ENCODE measurements at regions of chr9 and their contacts with region 1.

Region 1: DNA sequence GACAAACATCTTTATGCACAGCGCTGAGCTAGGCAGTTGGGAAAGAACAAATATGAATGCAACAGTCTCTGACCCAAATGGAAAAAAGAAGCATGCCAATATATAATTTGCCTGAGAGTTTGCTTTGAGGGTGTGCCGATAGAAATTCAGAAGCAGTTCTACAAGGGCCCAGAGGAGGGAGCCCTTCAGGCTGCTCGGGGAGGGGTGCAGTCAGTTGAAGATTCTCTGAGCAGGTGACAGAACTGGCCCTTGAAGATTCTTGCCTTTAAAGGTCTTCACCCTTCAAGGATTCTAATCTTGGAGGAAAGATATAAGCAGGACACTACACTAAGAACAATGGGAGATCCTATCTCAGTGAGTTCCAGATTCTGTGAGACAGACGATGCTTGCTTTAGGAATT is 3.7 kb upstream of the PAPPA start:
- DNase-seq: no peak
- ATAC-seq: no peak
- H3K4me3 ChIP-seq: no peak overlapping the region
- H3K27ac ChIP-seq: no peak overlapping the region
- H3K4me1 ChIP-seq: peaks cover 5% of the 10 kb centered on the region
- H3K27me3 ChIP-seq: no peaks in the 10 kb centered on the region
- CTCF ChIP-seq: peak; percentile 46
- POLR2A ChIP-seq: no peak
- RAD21 ChIP-seq: peak; percentile 44

Region 2: GRCh38 chr9:115649991-115650472 is 499.8 kb before region 1 on chr9:
- CTCF ChIA-PET with region 1: no interaction called
- POLR2A ChIA-PET with region 1: no interaction called
- dilution Hi-C with region 1: no loop called
- in situ Hi-C with region 1: no loop called
- intact Hi-C with region 1: no loop called
- DNase-seq: peak; percentile 99
- ATAC-seq: peak; percentile 75
- H3K4me3 ChIP-seq: no peak overlapping the region
- H3K27ac ChIP-seq: peak overlapping the region; percentile 86
- H3K4me1 ChIP-seq: peaks cover 12% of the 10 kb centered on the region
- H3K27me3 ChIP-seq: no peaks in the 10 kb centered on the region
- CTCF ChIP-seq: no peak
- POLR2A ChIP-seq: peak; percentile 44
- RAD21 ChIP-seq: peak; percentile 35; the same call in 1 of the 2 replicates

Region 3: DNA sequence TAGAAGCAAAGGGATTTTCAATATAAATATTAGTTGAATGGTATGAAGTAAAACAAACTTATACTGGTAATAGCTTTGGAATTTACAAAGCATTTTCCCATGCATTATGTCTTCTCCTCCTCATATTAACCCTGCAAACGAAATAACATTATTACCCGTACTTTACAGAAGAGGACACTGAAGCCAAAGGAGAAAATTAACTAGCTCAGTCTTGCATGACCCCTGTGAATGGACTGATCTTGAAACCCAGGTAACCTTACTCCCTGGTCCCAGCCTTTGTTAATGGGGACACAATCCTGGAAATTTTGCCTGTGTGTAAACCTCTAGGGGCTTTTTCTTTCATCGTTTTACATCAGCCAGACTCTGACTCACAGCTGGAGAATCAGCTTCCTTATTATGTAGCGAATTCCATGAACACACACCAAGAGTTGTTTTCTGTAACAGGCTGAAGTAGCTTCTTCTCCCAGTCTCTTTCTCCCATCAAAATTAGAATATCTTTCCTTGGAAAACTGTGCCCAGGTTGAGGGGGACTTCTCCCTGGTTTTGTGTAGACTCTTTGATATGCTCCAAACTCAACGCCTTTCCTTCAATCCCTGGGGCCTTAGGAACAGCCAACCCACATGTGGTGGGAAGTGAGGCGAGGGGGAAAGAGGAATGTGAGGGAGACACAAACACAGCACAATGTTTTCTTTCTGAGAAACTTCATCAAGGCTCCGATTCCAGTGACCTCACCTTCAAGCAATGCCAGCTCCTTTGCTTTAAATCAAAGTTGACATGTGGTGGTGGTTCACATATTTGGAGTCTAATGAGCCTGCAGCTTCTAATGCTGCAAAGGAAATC is 477.1 kb before region 1 on chr9:
- CTCF ChIA-PET with region 1: interaction called, 3 read pairs
- POLR2A ChIA-PET with region 1: no interaction called
- dilution Hi-C with region 1: no loop called
- in situ Hi-C with region 1: no loop called
- intact Hi-C with region 1: loop called (anchors 5 kb)
- DNase-seq: peak; percentile 99
- ATAC-seq: peak; percentile 74
- H3K4me3 ChIP-seq: peak overlapping the region; percentile 10; the same call in 1 of the 2 replicates
- H3K27ac ChIP-seq: peak overlapping the region; percentile 99
- H3K4me1 ChIP-seq: peaks cover 35% of the 10 kb centered on the region
- H3K27me3 ChIP-seq: no peaks in the 10 kb centered on the region
- CTCF ChIP-seq: no peak
- POLR2A ChIP-seq: peak; percentile 73
- RAD21 ChIP-seq: peak; percentile 32; the same call in 1 of the 2 replicates

Region 4: GRCh38 chr9:115808108-115808507 is 341.7 kb before region 1 on chr9:
- CTCF ChIA-PET with region 1: no interaction called
- POLR2A ChIA-PET with region 1: interaction called, 24 read pairs
- dilution Hi-C with region 1: no loop called
- in situ Hi-C with region 1: no loop called
- intact Hi-C with region 1: loop called (anchors 5 kb)
- DNase-seq: no peak
- ATAC-seq: no peak
- H3K4me3 ChIP-seq: no peak overlapping the region
- H3K27ac ChIP-seq: no peak overlapping the region
- H3K4me1 ChIP-seq: peaks cover 6% of the 10 kb centered on the region
- H3K27me3 ChIP-seq: no peaks in the 10 kb centered on the region
- CTCF ChIP-seq: no peak
- POLR2A ChIP-seq: no peak
- RAD21 ChIP-seq: no peak

Region 5: GRCh38 chr9:115923903-115924668 is 225.8 kb before region 1 on chr9:
- CTCF ChIA-PET with region 1: no interaction called
- POLR2A ChIA-PET with region 1: no interaction called
- dilution Hi-C with region 1: no loop called
- in situ Hi-C with region 1: no loop called
- intact Hi-C with region 1: loop called (anchors 1 kb)
- DNase-seq: peak; percentile 99
- ATAC-seq: peak; percentile 99
- H3K4me3 ChIP-seq: no peak overlapping the region
- H3K27ac ChIP-seq: peak overlapping the region; percentile 100
- H3K4me1 ChIP-seq: peaks cover 26% of the 10 kb centered on the region
- H3K27me3 ChIP-seq: no peaks in the 10 kb centered on the region
- CTCF ChIP-seq: no peak
- POLR2A ChIP-seq: no peak
- RAD21 ChIP-seq: no peak; the same call in none of the 2 replicates

Region 6: GRCh38 chr9:116027556-116028350 is 122.1 kb before region 1 on chr9:
- CTCF ChIA-PET with region 1: interaction called, 3 read pairs
- POLR2A ChIA-PET with region 1: interaction called, 7 read pairs
- dilution Hi-C with region 1: no loop called
- in situ Hi-C with region 1: no loop called
- intact Hi-C with region 1: loop called (anchors 1 kb)
- DNase-seq: peak; percentile 92
- ATAC-seq: peak; percentile 95
- H3K4me3 ChIP-seq: no peak overlapping the region
- H3K27ac ChIP-seq: peak overlapping the region; percentile 97
- H3K4me1 ChIP-seq: peaks cover 5% of the 10 kb centered on the region
- H3K27me3 ChIP-seq: no peaks in the 10 kb centered on the region
- CTCF ChIP-seq: no peak
- POLR2A ChIP-seq: no peak
- RAD21 ChIP-seq: no peak

Region 7: GRCh38 chr9:116101516-116101915 is 48.3 kb before region 1 on chr9:
- CTCF ChIA-PET with region 1: no interaction called
- POLR2A ChIA-PET with region 1: no interaction called
- dilution Hi-C with region 1: no loop called
- in situ Hi-C with region 1: no loop called
- intact Hi-C with region 1: loop called (anchors 5 kb)
- DNase-seq: peak; percentile 84
- ATAC-seq: 0 out of 2 replicates have a peak, but pooled peaks have one; percentile 4
- H3K4me3 ChIP-seq: no peak overlapping the region
- H3K27ac ChIP-seq: no peak overlapping the region
- H3K4me1 ChIP-seq: peaks cover 7% of the 10 kb centered on the region
- H3K27me3 ChIP-seq: no peaks in the 10 kb centered on the region
- CTCF ChIP-seq: no peak
- POLR2A ChIP-seq: no peak
- RAD21 ChIP-seq: no peak

Region 8: DNA sequence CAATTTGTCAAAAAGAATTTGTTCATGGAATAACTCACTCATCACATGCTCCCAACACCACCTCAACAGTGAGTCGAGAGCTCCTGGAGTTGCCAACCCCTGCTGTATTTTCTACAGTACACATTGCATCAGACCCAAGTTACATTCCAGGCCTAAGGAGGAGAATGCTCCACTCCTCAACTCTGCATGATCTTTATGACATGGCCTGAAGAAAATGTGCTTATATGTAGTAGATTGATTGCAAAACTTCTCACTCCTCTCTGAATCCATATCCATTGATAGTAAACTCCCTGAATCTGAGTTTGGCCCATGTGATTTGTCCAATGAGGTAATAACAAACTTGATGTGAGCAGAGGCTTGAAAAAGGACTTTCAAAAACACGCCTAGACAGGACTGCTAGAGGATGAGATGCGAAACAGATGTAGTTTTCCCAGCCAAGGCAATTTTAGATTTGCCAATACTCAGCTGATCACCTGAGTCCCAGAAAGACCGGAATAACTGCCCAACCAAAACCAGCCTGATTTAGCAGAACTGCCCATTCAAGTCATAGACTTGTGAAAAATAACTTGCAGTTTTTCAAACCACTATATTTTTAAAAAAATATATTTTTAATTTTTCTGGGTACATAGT is 25.3 kb before region 1 on chr9:
- CTCF ChIA-PET with region 1: no interaction called
- POLR2A ChIA-PET with region 1: no interaction called
- dilution Hi-C with region 1: no loop called
- in situ Hi-C with region 1: no loop called
- intact Hi-C with region 1: no loop called
- DNase-seq: peak; percentile 62
- ATAC-seq: peak; percentile 56; the same call in 1 of the 2 replicates
- H3K4me3 ChIP-seq: no peak overlapping the region
- H3K27ac ChIP-seq: no peak overlapping the region; the same call in 1 of the 2 replicates
- H3K4me1 ChIP-seq: peaks cover 2% of the 10 kb centered on the region; the same call in 1 of the 2 replicates
- H3K27me3 ChIP-seq: no peaks in the 10 kb centered on the region
- CTCF ChIP-seq: no peak
- POLR2A ChIP-seq: no peak
- RAD21 ChIP-seq: no peak

Region 9: GRCh38 chr9:116190637-116191425 is 41.0 kb after region 1 on chr9:
- CTCF ChIA-PET with region 1: no interaction called
- POLR2A ChIA-PET with region 1: no interaction called
- dilution Hi-C with region 1: no loop called
- in situ Hi-C with region 1: no loop called
- intact Hi-C with region 1: no loop called
- DNase-seq: peak; percentile 92
- ATAC-seq: peak; percentile 54
- H3K4me3 ChIP-seq: no peak overlapping the region
- H3K27ac ChIP-seq: peak overlapping the region; percentile 21; the same call in 1 of the 2 replicates
- H3K4me1 ChIP-seq: peaks cover 8% of the 10 kb centered on the region
- H3K27me3 ChIP-seq: no peaks in the 10 kb centered on the region
- CTCF ChIP-seq: no peak
- POLR2A ChIP-seq: no peak
- RAD21 ChIP-seq: no peak

Region 10: GRCh38 chr9:116524778-116525470 is 375.1 kb after region 1 on chr9:
- CTCF ChIA-PET with region 1: no interaction called
- POLR2A ChIA-PET with region 1: no interaction called
- dilution Hi-C with region 1: no loop called
- in situ Hi-C with region 1: no loop called
- intact Hi-C with region 1: no loop called
- DNase-seq: no peak
- ATAC-seq: no peak
- H3K4me3 ChIP-seq: no peak overlapping the region
- H3K27ac ChIP-seq: no peak overlapping the region
- H3K4me1 ChIP-seq: no peaks in the 10 kb centered on the region
- H3K27me3 ChIP-seq: peaks cover 2% of the 10 kb centered on the region; the same call in 1 of the 2 replicates
- CTCF ChIP-seq: no peak
- POLR2A ChIP-seq: no peak
- RAD21 ChIP-seq: no peak

Region 11: GRCh38 chr9:116646661-116647512 is 497.0 kb after region 1 on chr9:
- CTCF ChIA-PET with region 1: no interaction called
- POLR2A ChIA-PET with region 1: no interaction called
- dilution Hi-C with region 1: no loop called
- in situ Hi-C with region 1: no loop called
- intact Hi-C with region 1: loop called (anchors 10 kb)
- DNase-seq: peak; percentile 61
- ATAC-seq: peak; percentile 80
- H3K4me3 ChIP-seq: no peak overlapping the region
- H3K27ac ChIP-seq: no peak overlapping the region
- H3K4me1 ChIP-seq: peaks cover 4% of the 10 kb centered on the region
- H3K27me3 ChIP-seq: no peaks in the 10 kb centered on the region
- CTCF ChIP-seq: peak; percentile 72
- POLR2A ChIP-seq: no peak
- RAD21 ChIP-seq: peak; percentile 79

Measured in IMR-90 (cell line).